Activated naive CD4-positive, alpha-beta T cell treated with anti-CD3 and anti-CD28 coated beads, Interleukin-2, amount 10 ng/mL, durations not matched to agents 7 days and 5 days (primary cell): ENCODE measurements at regions of chr1 and their contacts with region 1.

Region 1: GRCh38 chr1:110203021-110203661 is 7.0 kb upstream of the KCNC4 start:
- DNase-seq: peak; percentile 81
- H3K4me3 Mint-ChIP-seq: no peak overlapping the region
- H3K27ac Mint-ChIP-seq: peak overlapping the region; percentile 82
- H3K4me1 Mint-ChIP-seq: peaks cover 27% of the 10 kb centered on the region
- H3K27me3 Mint-ChIP-seq: no peaks in the 10 kb centered on the region

Region 2: GRCh38 chr1:109802901-109803561 is 400.1 kb before region 1 on chr1:
- CTCF ChIA-PET with region 1: no interaction called
- DNase-seq: no peak
- H3K4me3 Mint-ChIP-seq: peak overlapping the region; percentile 40
- H3K27ac Mint-ChIP-seq: peak overlapping the region; percentile 98
- H3K4me1 Mint-ChIP-seq: peaks cover 88% of the 10 kb centered on the region
- H3K27me3 Mint-ChIP-seq: no peaks in the 10 kb centered on the region

Region 3: DNA sequence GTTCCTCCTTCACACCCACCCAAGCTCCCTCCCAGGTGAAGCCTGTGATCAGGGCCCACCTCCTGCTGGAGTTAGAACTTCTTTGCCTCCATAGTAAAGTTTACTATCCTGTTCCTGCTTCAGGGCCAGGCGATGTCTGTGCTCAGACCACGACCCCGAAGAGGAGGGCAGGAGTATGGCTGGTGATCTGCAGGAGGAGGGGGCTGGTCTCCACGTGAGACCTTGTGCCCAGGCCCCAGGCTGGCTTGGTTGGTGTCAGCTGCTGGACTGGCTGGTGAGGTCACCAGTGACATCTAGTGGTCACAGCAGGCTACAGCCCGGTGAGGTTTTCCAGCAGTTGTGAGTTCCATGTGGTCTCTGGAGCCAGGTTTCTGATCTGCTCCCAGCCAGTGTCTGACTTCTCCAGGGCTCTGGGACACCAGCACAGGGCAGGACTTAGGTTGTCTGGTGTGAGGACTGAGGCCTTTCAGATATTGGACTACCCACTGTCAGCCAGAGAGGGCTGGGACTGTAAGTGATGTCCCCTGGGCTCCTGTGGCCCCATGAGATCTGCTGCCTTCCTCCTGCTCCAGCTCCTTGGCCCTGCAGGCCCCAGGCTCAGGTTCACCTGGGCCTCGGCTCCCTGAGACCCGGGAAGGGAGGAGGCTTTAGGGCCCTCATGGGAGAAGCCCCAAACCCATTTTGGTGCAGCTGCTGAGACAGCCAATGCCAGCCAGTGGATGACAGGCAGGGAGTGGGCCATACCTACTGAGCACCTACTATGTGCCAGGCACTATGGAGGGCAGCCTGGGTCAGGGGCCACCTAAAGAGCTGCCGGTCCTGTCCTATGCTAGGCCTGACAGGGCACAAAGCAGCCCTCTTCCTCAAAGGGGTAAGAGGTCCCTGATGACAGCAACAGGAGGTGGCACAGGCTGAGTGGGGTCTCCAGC is 96.9 kb before region 1 on chr1:
- CTCF ChIA-PET with region 1: no interaction called
- DNase-seq: peak; percentile 73
- H3K4me3 Mint-ChIP-seq: no peak overlapping the region
- H3K27ac Mint-ChIP-seq: no peak overlapping the region
- H3K4me1 Mint-ChIP-seq: no peaks in the 10 kb centered on the region
- H3K27me3 Mint-ChIP-seq: peaks cover 39% of the 10 kb centered on the region

Region 4: DNA sequence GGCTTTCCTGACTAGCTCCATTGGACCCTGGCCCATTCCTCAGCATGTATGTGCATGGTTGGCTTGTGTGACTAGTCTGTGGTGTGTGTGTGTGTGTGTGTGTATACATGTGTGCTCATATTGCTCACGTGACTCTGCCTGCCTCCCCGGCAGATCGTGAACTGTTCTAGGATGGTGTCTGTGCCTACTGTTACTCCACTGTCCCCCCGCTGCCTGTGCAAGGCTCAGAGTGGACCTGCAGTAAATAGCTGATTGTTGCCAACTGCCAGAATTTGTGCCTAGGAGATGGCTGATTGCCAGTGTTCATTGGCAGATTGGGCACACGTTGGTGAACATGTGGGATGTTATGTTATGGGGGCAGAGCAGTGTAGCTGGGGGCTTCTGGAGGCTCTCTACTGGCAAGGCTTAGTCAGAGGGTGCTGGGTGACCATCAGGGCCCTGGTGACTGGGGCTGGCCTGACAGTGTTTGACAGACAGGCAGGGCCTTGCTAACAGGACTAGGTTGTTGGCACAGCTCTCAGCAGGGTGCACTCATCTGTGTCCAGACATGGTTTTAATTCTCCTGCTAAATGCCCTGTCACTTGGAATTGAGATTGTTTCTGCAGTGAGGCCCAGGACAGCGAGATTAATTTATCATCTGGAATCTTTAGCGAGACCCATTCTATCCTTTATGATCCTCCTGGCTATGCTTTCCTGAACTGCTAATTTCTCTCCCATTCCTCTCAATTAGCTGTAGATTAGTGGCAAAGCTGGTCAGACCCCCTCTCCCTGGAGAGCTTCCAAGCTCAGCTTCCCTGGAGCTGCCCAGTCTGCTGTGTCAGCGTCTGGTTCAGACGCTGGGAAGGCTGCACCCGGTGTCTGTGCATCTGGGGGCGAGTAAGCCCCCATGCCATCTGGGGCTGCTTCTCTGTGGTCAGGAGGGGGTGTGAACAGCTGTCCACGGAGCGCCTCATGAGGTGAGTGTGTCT is 32.1 kb before region 1 on chr1:
- CTCF ChIA-PET with region 1: no interaction called
- DNase-seq: no peak
- H3K4me3 Mint-ChIP-seq: no peak overlapping the region
- H3K27ac Mint-ChIP-seq: no peak overlapping the region
- H3K4me1 Mint-ChIP-seq: no peaks in the 10 kb centered on the region
- H3K27me3 Mint-ChIP-seq: peaks cover 19% of the 10 kb centered on the region

Region 5: GRCh38 chr1:110338886-110339406 is 135.8 kb after region 1 on chr1 and contains the start of gene RBM15:
- CTCF ChIA-PET with region 1: interaction called, 49 read pairs
- DNase-seq: peak; percentile 98
- H3K4me3 Mint-ChIP-seq: no peak within 1 kb of the TSS
- H3K27ac Mint-ChIP-seq: no peak within 1 kb of the TSS
- H3K4me1 Mint-ChIP-seq: peaks cover 60% of the 10 kb centered on the region
- H3K27me3 Mint-ChIP-seq: no peaks in the 10 kb centered on the region

Region 6: DNA sequence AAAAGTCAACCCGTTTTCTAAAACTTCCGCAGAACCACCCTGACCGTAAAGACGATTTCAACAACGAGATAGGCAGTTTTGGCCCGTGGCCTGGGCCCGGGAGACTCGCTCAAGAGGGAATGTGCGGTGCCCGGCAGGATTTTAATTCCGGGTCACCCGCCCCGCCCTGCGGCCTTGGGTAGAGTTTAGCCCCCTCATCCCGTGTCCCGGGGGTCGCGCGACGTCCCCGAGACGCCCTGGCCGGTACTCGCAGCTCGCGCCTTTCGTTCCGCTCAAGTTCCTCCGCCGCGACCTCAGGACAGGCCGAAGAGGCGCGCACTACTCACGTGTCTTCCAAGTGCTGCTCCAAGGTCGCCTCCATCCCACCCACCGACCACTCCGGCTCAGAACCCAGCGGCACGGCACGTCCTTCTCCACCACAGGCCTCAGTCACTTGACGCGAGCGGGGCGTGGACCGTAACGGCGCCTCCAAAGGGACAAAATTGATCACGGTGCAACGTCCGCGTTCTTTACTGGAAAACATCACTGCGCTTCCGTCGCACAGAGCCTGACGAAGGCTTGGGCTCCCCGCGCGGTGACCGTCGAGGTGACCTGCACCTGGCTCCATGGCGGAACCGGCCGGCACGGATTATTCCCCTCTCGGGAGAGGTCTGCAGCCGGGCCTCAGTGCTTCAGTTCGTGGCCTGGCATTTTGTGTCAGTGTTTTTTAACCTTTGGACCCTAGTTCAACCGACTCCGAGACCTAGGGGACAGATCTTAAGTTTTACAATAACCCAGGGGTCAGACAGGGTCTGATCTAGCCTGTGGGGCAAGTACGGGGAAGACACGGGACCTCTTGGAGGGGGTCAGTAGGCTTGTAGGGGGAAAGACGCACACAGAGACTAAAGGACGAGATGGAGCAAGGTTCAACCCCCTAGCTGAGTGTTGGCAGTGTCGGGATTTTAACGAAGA is 204.4 kb after region 1 on chr1 and contains the start of gene LAMTOR5:
- CTCF ChIA-PET with region 1: interaction called, 24 read pairs
- DNase-seq: peak; percentile 96
- H3K4me3 Mint-ChIP-seq: peak within 1 kb of the TSS; percentile 99
- H3K27ac Mint-ChIP-seq: peak within 1 kb of the TSS; percentile 99
- H3K4me1 Mint-ChIP-seq: peaks cover 33% of the 10 kb centered on the region
- H3K27me3 Mint-ChIP-seq: no peaks in the 10 kb centered on the region

Region 7: GRCh38 chr1:110412576-110412975 is 209.4 kb after region 1 on chr1:
- CTCF ChIA-PET with region 1: interaction called, 24 read pairs
- DNase-seq: peak; percentile 75
- H3K4me3 Mint-ChIP-seq: no peak overlapping the region
- H3K27ac Mint-ChIP-seq: no peak overlapping the region
- H3K4me1 Mint-ChIP-seq: peaks cover 17% of the 10 kb centered on the region
- H3K27me3 Mint-ChIP-seq: no peaks in the 10 kb centered on the region